Left lung (tissue), 14 donors: ENCODE measurements at regions of chr5 and their contacts with region 1.

Region 1: DNA sequence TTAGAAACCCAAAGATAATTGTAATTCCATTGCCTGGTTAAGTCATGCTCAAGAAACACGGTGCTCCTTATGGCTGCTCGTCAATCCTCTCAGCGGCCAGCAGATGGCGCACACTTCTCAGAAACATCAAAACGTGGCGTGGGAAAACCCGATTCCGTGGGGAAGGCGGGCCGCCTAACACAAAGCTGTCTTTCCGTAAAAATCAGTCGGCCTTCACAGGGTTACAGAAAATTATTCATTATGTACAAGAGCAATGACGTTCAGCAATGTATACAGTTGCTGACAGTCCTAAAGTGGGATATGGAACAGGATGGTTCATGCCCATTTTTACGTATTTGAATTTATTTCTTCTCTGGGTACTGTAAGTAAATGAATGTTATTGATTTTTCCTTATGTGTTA is 83.5 kb downstream of the PDE4D start:
- DNase-seq: peak; percentile 54 to 90 (median 73)
- ATAC-seq: peak; percentile 83
- H3K4me3 ChIP-seq: no peak overlapping the region
- H3K27ac ChIP-seq: no peak overlapping the region
- H3K4me1 ChIP-seq: peaks cover 0 to 18% of the 10 kb centered on the region in 2 donors
- H3K27me3 ChIP-seq: peaks cover 0 to 5% of the 10 kb centered on the region in 2 donors
- CTCF ChIP-seq: peak; percentile 80 to 92

Region 2: GRCh38 chr5:59768152-59769040 is 41.6 kb before region 1 on chr5:
- intact Hi-C with region 1: no loop called
- DNase-seq: peak; percentile 54 to 91 (median 86)
- ATAC-seq: peak; percentile 83
- H3K4me3 ChIP-seq: peak overlapping the region; percentile 28 to 35
- H3K27ac ChIP-seq: peak overlapping the region in 1 of 2 donors; percentile 33
- H3K4me1 ChIP-seq: peaks cover 0 to 12% of the 10 kb centered on the region in 2 donors
- H3K27me3 ChIP-seq: peaks cover 0 to 36% of the 10 kb centered on the region in 2 donors
- CTCF ChIP-seq: no peak

Region 3: GRCh38 chr5:60161340-60161934 is 351.4 kb after region 1 on chr5:
- intact Hi-C with region 1: loop called in 1 of 2 experiments (anchors 10 kb)
- DNase-seq: no peak
- ATAC-seq: peak; percentile 63
- H3K4me3 ChIP-seq: no peak overlapping the region
- H3K27ac ChIP-seq: no peak overlapping the region
- H3K4me1 ChIP-seq: no peaks in the 10 kb centered on the region
- H3K27me3 ChIP-seq: no peaks in the 10 kb centered on the region
- CTCF ChIP-seq: peak; percentile 47 to 51

Region 4: DNA sequence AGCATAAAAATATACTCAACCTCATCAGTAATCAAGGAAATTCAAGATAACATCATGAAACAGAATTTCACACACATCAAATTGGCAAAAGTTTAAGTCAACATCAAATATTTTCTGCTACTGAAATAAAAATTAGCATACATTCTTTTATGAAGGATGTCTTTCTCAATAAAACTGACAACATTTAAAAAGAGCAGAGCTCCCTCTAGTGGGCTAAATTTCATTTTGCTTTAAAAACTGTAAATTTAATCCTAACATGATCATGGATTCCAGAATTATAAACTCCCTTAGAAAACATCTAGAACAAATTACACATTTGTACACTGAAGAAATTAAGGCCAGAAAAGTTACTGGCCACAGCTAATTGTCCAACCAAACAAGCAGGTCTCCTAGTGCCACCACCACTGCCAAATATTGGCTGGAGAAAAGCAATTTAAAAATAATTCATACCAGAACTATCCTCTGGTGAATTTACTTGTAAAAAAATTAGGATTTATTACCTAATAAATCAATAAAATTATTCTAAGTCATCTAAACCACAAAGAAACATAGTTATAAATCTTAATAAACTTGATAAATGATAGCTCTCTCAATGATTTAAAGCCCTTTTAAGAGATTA is 858.8 kb after region 1 on chr5:
- intact Hi-C with region 1: loop called in 1 of 2 experiments (anchors 5 kb)
- DNase-seq: peak in 2 of 4 donors; percentile 31 to 36
- ATAC-seq: peak; percentile 36
- H3K4me3 ChIP-seq: no peak overlapping the region
- H3K27ac ChIP-seq: no peak overlapping the region
- H3K4me1 ChIP-seq: no peaks in the 10 kb centered on the region
- H3K27me3 ChIP-seq: no peaks in the 10 kb centered on the region
- CTCF ChIP-seq: peak; percentile 46 to 60